ENCODE measurements at regions of chr13 and their contacts with region 1.

Region 1: GRCh38 chr13:78323848-78324247 is 279.5 kb downstream of the POU4F1 start:
- DNase-seq: peak; percentile 66
- H3K4me3 ChIP-seq: no peak overlapping the region
- H3K27ac ChIP-seq: no peak overlapping the region
- H3K4me1 ChIP-seq: peaks cover 12% of the 10 kb centered on the region
- H3K27me3 ChIP-seq: no peaks in the 10 kb centered on the region
- CTCF ChIP-seq: no peak
- POLR2A ChIP-seq: no peak

Region 2: DNA sequence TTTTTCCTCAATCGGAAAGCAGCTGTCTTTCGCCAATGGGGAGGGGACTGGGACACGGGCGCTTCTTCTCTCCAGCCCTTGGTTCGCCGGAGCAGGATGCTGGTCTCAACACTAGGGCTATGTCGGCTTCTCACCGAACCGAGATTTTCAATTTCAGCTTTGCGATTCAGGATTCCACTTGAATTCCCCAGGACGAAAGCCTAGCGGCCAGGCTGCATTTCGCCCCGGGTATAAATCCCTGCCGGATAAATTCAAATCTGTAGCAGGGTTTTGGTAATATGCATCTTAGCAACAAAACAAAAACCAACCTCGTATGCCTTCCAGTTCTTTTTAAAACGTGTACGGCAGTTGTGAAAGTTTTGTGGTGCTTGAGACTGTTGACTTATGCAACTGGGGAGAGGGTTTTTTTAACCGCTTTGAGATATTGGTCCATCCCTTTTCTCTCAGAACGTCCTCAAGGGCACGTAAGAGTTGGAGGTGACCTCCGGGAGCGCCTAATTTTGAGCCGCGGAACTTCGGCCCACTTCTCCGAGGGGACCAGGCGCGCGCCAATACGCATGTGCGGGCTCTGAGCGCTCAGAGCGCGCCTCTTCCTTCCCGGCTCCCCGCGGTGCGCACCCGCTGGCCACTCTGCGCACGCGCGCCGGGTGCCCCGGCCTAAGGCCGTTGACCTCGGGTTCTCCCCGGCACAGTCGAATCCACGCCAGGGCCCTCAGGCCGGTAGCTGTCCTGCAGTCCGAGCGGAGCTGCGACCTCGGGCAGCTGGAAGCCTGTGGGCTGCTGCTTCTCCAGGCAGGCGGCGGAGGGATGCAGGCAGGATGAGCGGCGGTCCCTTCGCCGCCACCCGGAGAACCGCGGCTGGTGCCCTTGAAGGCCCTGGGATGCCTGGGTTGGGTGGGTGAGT is 271.9 kb after region 1 on chr13:
- CTCF ChIA-PET with region 1: no interaction called
- POLR2A ChIA-PET with region 1: no interaction called
- dilution Hi-C with region 1: no loop called
- intact Hi-C with region 1: loop called (anchors 5 kb)
- DNase-seq: no peak
- H3K4me3 ChIP-seq: peak overlapping the region in 2 of 3 experiments; percentile 25 to 30
- H3K27ac ChIP-seq: no peak overlapping the region
- H3K4me1 ChIP-seq: peaks cover 6% of the 10 kb centered on the region
- H3K27me3 ChIP-seq: peaks cover 79 to 100% of the 10 kb centered on the region in 2 experiments
- CTCF ChIP-seq: no peak
- POLR2A ChIP-seq: no peak

Measured in endothelial cell of umbilical vein (primary cell).